ENCODE measurements at regions of chr2 and their contacts with region 1.

Region 1: GRCh38 chr2:164917296-164917903 is 37.9 kb downstream of the SLC38A11 start:
- DNase-seq: peak; percentile 15
- H3K4me3 ChIP-seq: no peak overlapping the region
- H3K27ac ChIP-seq: no peak overlapping the region
- H3K4me1 ChIP-seq: peaks cover 0 to 7% of the 10 kb centered on the region in 2 experiments; a peak in 2 of 4 replicates
- H3K27me3 ChIP-seq: no peaks in the 10 kb centered on the region
- CTCF ChIP-seq: peak; percentile 59
- EP300 ChIP-seq: no peak
- RAD21 ChIP-seq: peak; percentile 85

Region 2: GRCh38 chr2:164737612-164738081 is 179.8 kb before region 1 on chr2:
- CTCF ChIA-PET with region 1: interaction called, 22 read pairs
- POLR2A ChIA-PET with region 1: no interaction called
- DNase-seq: peak; percentile 57
- H3K4me3 ChIP-seq: no peak overlapping the region; a peak in 1 of 4 replicates
- H3K27ac ChIP-seq: no peak overlapping the region
- H3K4me1 ChIP-seq: peaks cover 2 to 5% of the 10 kb centered on the region in 2 experiments; a peak in 2 of 4 replicates
- H3K27me3 ChIP-seq: no peaks in the 10 kb centered on the region
- CTCF ChIP-seq: peak; percentile 85
- EP300 ChIP-seq: no peak
- RAD21 ChIP-seq: peak; percentile 92

Region 3: GRCh38 chr2:164808776-164809175 is 108.6 kb before region 1 on chr2:
- CTCF ChIA-PET with region 1: no interaction called
- POLR2A ChIA-PET with region 1: no interaction called
- DNase-seq: no peak
- H3K4me3 ChIP-seq: no peak overlapping the region
- H3K27ac ChIP-seq: peak overlapping the region in 1 of 2 experiments; percentile 51; a peak in 3 of 4 replicates
- H3K4me1 ChIP-seq: peaks cover 0 to 3% of the 10 kb centered on the region in 2 experiments; a peak in 1 of 4 replicates
- H3K27me3 ChIP-seq: no peaks in the 10 kb centered on the region
- CTCF ChIP-seq: no peak
- EP300 ChIP-seq: no peak
- RAD21 ChIP-seq: no peak

Measured in SK-N-SH (cell line).